ENCODE measurements at regions of chr7 and their contacts with region 1.

Region 1: GRCh38 chr7:114939484-114940097 is 17.7 kb downstream of the MDFIC start:
- DNase-seq: peak in 8 of 35 experiments; percentile 13 to 50 (median 16)
- ATAC-seq: no peak
- H3K4me3 ChIP-seq: no peak overlapping the region
- H3K4me3 Mint-ChIP-seq: no peak overlapping the region
- H3K27ac ChIP-seq: no peak overlapping the region
- H3K27ac Mint-ChIP-seq: no peak overlapping the region
- H3K4me1 ChIP-seq: peaks cover 1 to 6% of the 10 kb centered on the region in 2 experiments
- H3K4me1 Mint-ChIP-seq: peaks cover 58 to 73% (median 65%) of the 10 kb centered on the region in 3 donors
- H3K27me3 ChIP-seq: no peaks in the 10 kb centered on the region
- H3K27me3 Mint-ChIP-seq: no peaks in the 10 kb centered on the region

Region 2: GRCh38 chr7:114865564-114865963 is 74.0 kb before region 1 on chr7:
- CTCF ChIA-PET with region 1: interaction called in 1 of 2 experiments, 68 read pairs
- POLR2A ChIA-PET with region 1: no interaction called
- DNase-seq: peak; percentile 2 to 74 (median 40)
- ATAC-seq: peak; percentile 50 to 79 (median 72)
- H3K4me3 ChIP-seq: no peak overlapping the region
- H3K4me3 Mint-ChIP-seq: no peak overlapping the region
- H3K27ac ChIP-seq: no peak overlapping the region
- H3K27ac Mint-ChIP-seq: no peak overlapping the region
- H3K4me1 ChIP-seq: no peaks in the 10 kb centered on the region
- H3K4me1 Mint-ChIP-seq: peaks cover 0 to 5% (median 2%) of the 10 kb centered on the region in 3 donors
- H3K27me3 ChIP-seq: no peaks in the 10 kb centered on the region
- H3K27me3 Mint-ChIP-seq: no peaks in the 10 kb centered on the region

Region 3: GRCh38 chr7:114901781-114902180 is 37.8 kb before region 1 on chr7:
- CTCF ChIA-PET with region 1: no interaction called
- POLR2A ChIA-PET with region 1: interaction called in 1 of 2 experiments, 12 read pairs
- DNase-seq: no peak
- ATAC-seq: no peak
- H3K4me3 ChIP-seq: no peak overlapping the region
- H3K4me3 Mint-ChIP-seq: no peak overlapping the region
- H3K27ac ChIP-seq: no peak overlapping the region
- H3K27ac Mint-ChIP-seq: no peak overlapping the region
- H3K4me1 ChIP-seq: no peaks in the 10 kb centered on the region
- H3K4me1 Mint-ChIP-seq: no peaks in the 10 kb centered on the region
- H3K27me3 ChIP-seq: no peaks in the 10 kb centered on the region
- H3K27me3 Mint-ChIP-seq: no peaks in the 10 kb centered on the region

Region 4: GRCh38 chr7:114922652-114923402 is 16.8 kb before region 1 on chr7:
- CTCF ChIA-PET with region 1: interaction called in 1 of 2 experiments, 18 read pairs
- POLR2A ChIA-PET with region 1: interaction called, 3 to 4 read pairs
- DNase-seq: peak; percentile 24 to 76 (median 51)
- ATAC-seq: peak; percentile 76 to 84 (median 80)
- H3K4me3 ChIP-seq: peak overlapping the region; percentile 71 to 94
- H3K4me3 Mint-ChIP-seq: peak overlapping the region; percentile 91 to 96 (median 95)
- H3K27ac ChIP-seq: peak overlapping the region; percentile 82
- H3K27ac Mint-ChIP-seq: peak overlapping the region; percentile 98
- H3K4me1 ChIP-seq: peaks cover 12 to 40% of the 10 kb centered on the region in 2 experiments
- H3K4me1 Mint-ChIP-seq: peaks cover 38 to 56% (median 56%) of the 10 kb centered on the region in 3 donors
- H3K27me3 ChIP-seq: no peaks in the 10 kb centered on the region
- H3K27me3 Mint-ChIP-seq: no peaks in the 10 kb centered on the region

Measured in T-cell (primary cell).